ENCODE measurements at regions of chr11 and their contacts with region 1.

Region 1: DNA sequence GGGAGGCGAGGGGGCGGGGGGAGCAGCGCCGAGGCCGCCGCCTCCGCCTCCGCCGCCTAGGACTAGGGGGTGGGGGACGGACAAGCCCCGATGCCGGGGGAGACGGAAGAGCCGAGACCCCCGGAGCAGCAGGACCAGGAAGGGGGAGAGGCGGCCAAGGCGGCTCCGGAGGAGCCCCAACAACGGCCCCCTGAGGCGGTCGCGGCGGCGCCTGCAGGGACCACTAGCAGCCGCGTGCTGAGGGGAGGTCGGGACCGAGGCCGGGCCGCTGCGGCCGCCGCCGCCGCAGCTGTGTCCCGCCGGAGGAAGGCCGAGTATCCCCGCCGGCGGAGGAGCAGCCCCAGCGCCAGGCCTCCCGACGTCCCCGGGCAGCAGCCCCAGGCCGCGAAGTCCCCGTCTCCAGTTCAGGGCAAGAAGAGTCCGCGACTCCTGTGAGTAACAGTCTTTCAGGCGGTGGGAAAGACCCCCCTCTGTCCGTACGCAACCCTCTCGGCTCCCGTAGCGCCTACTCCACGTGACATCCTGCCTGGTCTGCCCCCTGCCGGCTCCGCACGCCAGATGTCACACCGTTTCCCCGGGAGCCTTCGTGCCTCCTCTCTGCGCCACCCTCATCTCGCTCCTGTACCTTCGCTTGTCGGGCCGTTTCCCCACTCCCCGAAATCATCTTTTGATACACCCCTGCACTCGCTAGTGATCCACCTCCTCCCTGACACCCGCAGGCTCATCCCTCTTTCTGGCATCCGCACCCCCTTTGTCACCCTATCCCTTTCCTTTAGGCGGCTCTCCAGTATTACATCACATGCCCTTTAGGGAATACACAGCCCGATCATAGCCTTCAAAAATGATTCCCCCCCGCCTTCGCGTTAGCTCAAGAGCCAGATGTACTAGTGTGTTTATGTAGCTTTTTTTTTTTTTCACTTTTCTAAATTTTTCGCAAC is 598 bp downstream of the ZFP91 start:
- DNase-seq: peak; percentile 89
- ATAC-seq: peak; percentile 45
- H3K4me3 ChIP-seq: peak overlapping the region; percentile 83
- H3K27ac ChIP-seq: peak overlapping the region; percentile 89
- H3K4me1 ChIP-seq: peaks cover 56% of the 10 kb centered on the region
- H3K27me3 ChIP-seq: no peaks in the 10 kb centered on the region
- CTCF ChIP-seq: peak; percentile 85

Region 2: DNA sequence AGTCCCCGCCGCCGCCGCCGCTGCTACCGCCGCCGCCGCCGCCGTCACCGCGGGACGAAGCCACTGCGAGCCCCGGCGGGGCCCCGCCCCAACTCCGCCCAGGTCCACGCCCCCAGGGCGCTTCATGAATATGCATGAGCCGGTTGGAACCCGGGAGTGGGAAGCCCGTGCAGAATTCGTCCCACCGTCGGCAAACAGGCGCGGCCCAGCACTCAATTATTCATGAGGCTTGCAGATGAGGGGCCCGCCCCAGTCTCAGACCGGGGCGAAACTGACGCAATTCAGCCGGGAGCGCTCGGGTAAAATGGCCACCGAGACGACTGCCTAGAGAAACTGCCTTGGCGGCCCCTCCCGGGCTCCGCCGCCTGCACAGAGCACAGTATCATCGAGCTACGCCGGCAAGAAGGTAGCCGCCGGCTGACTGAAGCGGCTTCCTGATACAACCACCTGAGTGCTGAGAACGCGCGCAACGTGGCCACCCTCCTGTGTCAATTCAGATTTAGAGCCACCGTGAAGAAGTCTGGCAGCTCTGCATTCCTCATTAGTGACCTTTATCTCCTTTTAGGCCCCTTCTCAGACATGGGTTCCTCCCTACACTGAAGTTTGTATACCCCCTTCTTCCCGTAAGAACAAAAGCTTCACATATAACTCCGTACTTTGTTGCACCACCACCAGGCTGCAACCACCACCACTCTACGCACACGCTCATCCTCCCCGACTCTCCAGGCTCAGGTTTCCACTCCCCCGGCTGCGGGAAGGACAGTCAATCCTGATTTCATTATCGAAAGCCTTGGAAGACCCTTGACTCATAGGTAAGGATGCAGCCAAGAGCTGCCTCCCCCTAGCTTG is 1254.4 kb before region 1 on chr11 and contains the start of gene TNKS1BP1:
- CTCF ChIA-PET with region 1: no interaction called
- POLR2A ChIA-PET with region 1: no interaction called
- intact Hi-C with region 1: loop called (anchors 5 kb)
- DNase-seq: peak; percentile 98
- ATAC-seq: peak; percentile 64
- H3K4me3 ChIP-seq: peak within 1 kb of the TSS; percentile 85
- H3K27ac ChIP-seq: peak within 1 kb of the TSS; percentile 85
- H3K4me1 ChIP-seq: peaks cover 53% of the 10 kb centered on the region
- H3K27me3 ChIP-seq: no peaks in the 10 kb centered on the region
- CTCF ChIP-seq: no peak
- total RNA-seq, gene TNKS1BP1: 89.6 and 143 TPM in 2 replicates

Region 3: GRCh38 chr11:57712256-57713150 is 867.0 kb before region 1 on chr11 and contains the start of gene TMX2:
- CTCF ChIA-PET with region 1: no interaction called
- POLR2A ChIA-PET with region 1: no interaction called
- intact Hi-C with region 1: loop called (anchors 1 kb)
- DNase-seq: peak; percentile 99
- ATAC-seq: peak; percentile 92
- H3K4me3 ChIP-seq: peak within 1 kb of the TSS; percentile 99
- H3K27ac ChIP-seq: peak within 1 kb of the TSS; percentile 75
- H3K4me1 ChIP-seq: peaks cover 24% of the 10 kb centered on the region
- H3K27me3 ChIP-seq: no peaks in the 10 kb centered on the region
- CTCF ChIP-seq: no peak
- total RNA-seq, gene TMX2: 228 and 241 TPM in 2 replicates

Region 4: DNA sequence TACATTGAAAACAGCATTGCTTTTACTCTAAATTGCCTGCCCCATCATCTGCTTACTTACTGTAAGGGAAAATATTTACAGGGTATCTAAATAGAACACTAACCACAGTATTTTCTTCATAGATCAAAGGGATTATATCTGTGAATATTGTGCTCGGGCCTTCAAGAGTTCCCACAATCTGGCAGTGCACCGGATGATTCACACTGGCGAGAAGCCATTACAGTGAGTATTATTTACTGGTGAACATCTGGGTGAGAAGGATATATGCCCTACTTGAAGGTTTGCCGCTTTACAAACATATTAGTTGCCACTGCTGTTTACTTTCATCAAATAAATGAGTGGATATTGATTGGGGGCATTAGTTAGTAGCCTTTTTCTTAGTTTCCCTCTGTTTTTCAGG is 37.1 kb after region 1 on chr11:
- CTCF ChIA-PET with region 1: no interaction called
- POLR2A ChIA-PET with region 1: no interaction called
- intact Hi-C with region 1: loop called (anchors 1 kb)
- DNase-seq: peak; percentile 96
- ATAC-seq: peak; percentile 98
- H3K4me3 ChIP-seq: no peak overlapping the region
- H3K27ac ChIP-seq: peak overlapping the region; percentile 19; the same call in 1 of the 2 replicates
- H3K4me1 ChIP-seq: peaks cover 22% of the 10 kb centered on the region
- H3K27me3 ChIP-seq: no peaks in the 10 kb centered on the region
- CTCF ChIP-seq: no peak

Region 5: DNA sequence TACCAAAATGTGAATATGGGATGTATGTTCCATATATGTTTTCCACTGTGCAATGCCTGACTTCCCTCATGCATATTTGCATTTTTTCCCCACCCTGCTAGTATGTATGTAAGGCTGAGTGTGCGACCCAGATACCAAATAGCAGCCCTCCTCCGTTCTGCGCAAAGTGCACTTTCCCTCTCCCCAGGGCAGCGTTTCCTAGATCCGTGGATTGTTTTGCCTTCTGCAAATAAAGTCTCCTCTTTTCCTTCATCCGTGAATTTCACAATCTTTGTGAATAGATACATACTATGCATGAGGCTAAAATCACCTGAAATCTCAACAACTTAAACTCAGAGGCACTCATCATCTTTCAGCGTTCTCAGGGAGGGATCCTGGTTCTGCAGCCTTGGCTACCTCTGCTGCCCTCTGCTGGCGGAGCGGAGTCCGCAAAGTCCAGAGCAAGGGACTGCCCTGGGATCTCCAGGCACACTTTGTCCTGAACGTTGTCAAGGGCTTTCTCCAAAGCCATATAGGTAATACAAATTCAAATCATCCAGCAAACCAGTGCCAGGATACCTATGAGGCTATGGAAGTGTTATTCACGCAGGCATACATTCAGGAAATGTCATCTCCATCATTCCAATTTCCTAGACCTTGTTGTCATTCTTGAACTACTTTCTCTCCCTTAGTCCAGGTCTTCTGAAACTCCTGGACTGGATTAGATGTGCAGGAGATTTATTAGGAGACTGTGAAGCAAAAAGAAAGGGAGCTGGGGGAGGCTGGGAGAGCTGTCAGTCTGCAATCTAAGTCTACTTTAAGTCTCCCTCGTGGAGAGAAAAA is 96.1 kb after region 1 on chr11:
- CTCF ChIA-PET with region 1: interaction called, 3 read pairs
- POLR2A ChIA-PET with region 1: no interaction called
- intact Hi-C with region 1: loop called (anchors 1 kb)
- DNase-seq: peak; percentile 85
- ATAC-seq: peak; percentile 98
- H3K4me3 ChIP-seq: no peak overlapping the region
- H3K27ac ChIP-seq: no peak overlapping the region
- H3K4me1 ChIP-seq: no peaks in the 10 kb centered on the region
- H3K27me3 ChIP-seq: peaks cover 9% of the 10 kb centered on the region; the same call in 1 of the 2 replicates
- CTCF ChIP-seq: peak; percentile 99

Region 6: DNA sequence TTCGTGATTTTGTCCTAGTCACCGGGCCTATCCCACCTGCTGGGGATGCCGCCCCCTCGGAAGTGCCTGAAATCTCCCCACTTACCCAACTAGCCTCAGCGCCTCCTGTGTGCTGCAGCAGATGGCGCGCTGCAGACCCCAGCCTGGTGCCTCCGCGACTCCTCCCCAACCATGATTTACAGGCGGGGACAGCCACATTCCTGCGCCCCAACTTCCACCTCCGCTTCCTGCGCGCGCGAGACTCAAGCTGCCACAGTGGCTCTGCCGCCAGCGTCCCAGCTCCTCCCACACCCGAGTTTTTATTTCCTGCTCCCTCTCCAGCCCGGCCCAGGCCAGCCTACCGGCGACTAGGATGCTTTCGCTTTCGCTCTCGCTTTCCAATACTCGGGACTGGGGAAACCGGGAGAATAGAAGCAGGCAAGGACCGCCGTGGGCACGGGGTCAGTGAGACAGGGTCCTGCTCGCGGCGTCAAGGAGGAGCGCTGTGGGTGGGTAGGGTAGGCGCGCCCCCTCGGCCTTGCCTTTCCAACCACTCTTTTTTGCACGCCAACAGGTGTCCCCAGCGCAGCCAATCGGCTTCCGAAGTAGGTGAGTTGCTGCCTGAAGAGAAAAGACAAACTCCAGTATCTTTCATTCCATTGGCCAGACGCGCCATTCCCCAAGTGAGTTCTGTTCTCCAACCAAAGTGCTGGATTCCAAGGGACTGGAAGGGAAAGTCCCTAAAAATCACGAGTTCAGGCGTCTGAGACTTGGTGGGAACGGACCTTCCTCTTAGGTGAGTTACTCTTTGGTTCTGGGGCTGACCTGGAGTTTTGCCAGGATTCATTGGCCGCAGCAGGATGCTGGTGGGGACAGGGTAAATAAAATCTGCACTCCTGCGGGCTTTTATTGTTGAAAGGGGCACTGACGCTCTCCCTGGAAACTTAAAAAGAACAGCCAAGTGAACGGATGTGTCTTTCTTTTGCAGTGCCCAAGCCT is 563.4 kb after region 1 on chr11 and contains the start of gene FAM111A:
- CTCF ChIA-PET with region 1: no interaction called
- POLR2A ChIA-PET with region 1: no interaction called
- intact Hi-C with region 1: loop called (anchors 5 kb)
- DNase-seq: peak; percentile 96
- ATAC-seq: peak; percentile 77
- H3K4me3 ChIP-seq: peak within 1 kb of the TSS; percentile 79
- H3K27ac ChIP-seq: peak within 1 kb of the TSS; percentile 68
- H3K4me1 ChIP-seq: peaks cover 38% of the 10 kb centered on the region
- H3K27me3 ChIP-seq: no peaks in the 10 kb centered on the region
- CTCF ChIP-seq: peak; percentile 49
- total RNA-seq, gene FAM111A: 38.9 and 49.2 TPM in 2 replicates

Measured in PC-3 (cell line).